ENCODE measurements at regions of chr13 and their contacts with region 1.

Region 1: GRCh38 chr13:106680796-106681472 is 113.0 kb upstream of the ARGLU1 start:
- DNase-seq: no peak
- H3K4me3 ChIP-seq: no peak overlapping the region
- H3K4me3 Mint-ChIP-seq: no peak overlapping the region
- H3K27ac Mint-ChIP-seq: no peak overlapping the region
- H3K4me1 ChIP-seq: peaks cover 43% of the 10 kb centered on the region
- H3K4me1 Mint-ChIP-seq: peaks cover 50% of the 10 kb centered on the region
- H3K27me3 ChIP-seq: no peaks in the 10 kb centered on the region
- H3K27me3 Mint-ChIP-seq: no peaks in the 10 kb centered on the region
- CTCF ChIP-seq: no peak

Region 2: GRCh38 chr13:106471957-106472543 is 208.9 kb before region 1 on chr13:
- CTCF ChIA-PET with region 1: no interaction called
- POLR2A ChIA-PET with region 1: no interaction called
- intact Hi-C with region 1: no loop called
- DNase-seq: peak; percentile 81 to 93
- H3K4me3 ChIP-seq: peak overlapping the region; percentile 27
- H3K4me3 Mint-ChIP-seq: peak overlapping the region; percentile 71
- H3K27ac Mint-ChIP-seq: peak overlapping the region; percentile 84
- H3K4me1 ChIP-seq: peaks cover 69% of the 10 kb centered on the region
- H3K4me1 Mint-ChIP-seq: peaks cover 48% of the 10 kb centered on the region
- H3K27me3 ChIP-seq: no peaks in the 10 kb centered on the region
- H3K27me3 Mint-ChIP-seq: no peaks in the 10 kb centered on the region
- CTCF ChIP-seq: no peak

Region 3: DNA sequence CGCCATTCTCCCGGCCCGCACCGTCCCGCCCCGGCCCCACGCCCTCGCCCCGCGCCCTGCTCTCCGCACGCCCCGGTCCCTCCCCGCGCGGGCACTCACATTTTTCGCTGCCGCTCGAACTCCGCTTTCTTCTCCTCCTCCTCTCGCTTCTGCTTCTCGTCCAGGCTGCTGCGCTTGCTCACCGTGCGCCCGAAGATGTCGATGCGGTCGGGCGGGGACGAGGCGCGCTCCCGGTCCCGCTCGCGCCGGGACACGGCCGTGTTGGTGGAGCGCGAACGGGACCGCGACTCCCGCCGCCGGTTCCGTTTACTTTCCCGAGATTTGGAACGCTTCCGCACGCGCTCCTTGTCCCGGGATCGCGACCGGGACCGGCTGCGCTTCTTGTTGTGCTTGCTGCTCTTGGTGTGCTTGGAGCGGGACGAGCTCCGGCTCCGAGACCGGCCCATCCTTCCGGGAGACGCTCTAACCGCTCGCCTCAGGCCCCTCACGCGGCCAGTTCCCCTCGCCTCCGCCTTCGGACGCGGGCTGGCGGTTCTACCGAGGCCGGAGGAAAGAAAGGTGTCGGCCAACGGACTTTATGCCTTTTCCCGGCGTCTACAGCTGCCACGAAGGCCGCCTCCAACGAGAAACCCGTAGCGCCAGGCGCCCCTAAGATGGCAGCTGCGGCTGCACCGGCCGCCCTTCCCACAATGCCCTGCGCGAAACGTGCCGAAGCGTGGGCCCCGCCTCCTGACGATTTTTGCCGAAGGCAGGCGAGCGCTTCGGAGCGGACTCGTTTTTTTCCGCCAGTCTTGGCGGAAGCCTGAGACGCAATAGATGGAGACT is 113.2 kb before region 1 on chr13 and contains the start of gene ARGLU1:
- CTCF ChIA-PET with region 1: no interaction called
- POLR2A ChIA-PET with region 1: no interaction called
- intact Hi-C with region 1: loop called (anchors 5 kb)
- DNase-seq: peak; percentile 93 to 97
- H3K4me3 ChIP-seq: peak within 1 kb of the TSS; percentile 93
- H3K4me3 Mint-ChIP-seq: peak within 1 kb of the TSS; percentile 87
- H3K27ac Mint-ChIP-seq: peak within 1 kb of the TSS; percentile 95
- H3K4me1 ChIP-seq: peaks cover 41% of the 10 kb centered on the region
- H3K4me1 Mint-ChIP-seq: peaks cover 16% of the 10 kb centered on the region
- H3K27me3 ChIP-seq: no peaks in the 10 kb centered on the region
- H3K27me3 Mint-ChIP-seq: no peaks in the 10 kb centered on the region
- CTCF ChIP-seq: no peak
- total RNA-seq, gene ARGLU1: 127 and 137 TPM in 2 replicates

Region 4: GRCh38 chr13:106899439-106899838 is 218.5 kb after region 1 on chr13:
- CTCF ChIA-PET with region 1: no interaction called
- POLR2A ChIA-PET with region 1: no interaction called
- intact Hi-C with region 1: loop called (anchors 5 kb)
- DNase-seq: peak; percentile 40 to 59
- H3K4me3 ChIP-seq: no peak overlapping the region
- H3K4me3 Mint-ChIP-seq: no peak overlapping the region
- H3K27ac Mint-ChIP-seq: no peak overlapping the region
- H3K4me1 ChIP-seq: peaks cover 7% of the 10 kb centered on the region; the same call in 1 of the 2 replicates
- H3K4me1 Mint-ChIP-seq: peaks cover 7% of the 10 kb centered on the region
- H3K27me3 ChIP-seq: no peaks in the 10 kb centered on the region
- H3K27me3 Mint-ChIP-seq: no peaks in the 10 kb centered on the region
- CTCF ChIP-seq: no peak

Measured in Caco-2 (cell line).